MCF 10A (cell line): ENCODE measurements at regions of chr7 and their contacts with region 1.

Region 1: GRCh38 chr7:17680943-17681351 is 259.3 kb downstream of the SNX13 start:
- DNase-seq: peak; percentile 41
- H3K4me3 Mint-ChIP-seq: peak overlapping the region; percentile 37
- H3K27ac Mint-ChIP-seq: peak overlapping the region; percentile 95
- H3K4me1 Mint-ChIP-seq: peaks cover 69% of the 10 kb centered on the region
- H3K27me3 Mint-ChIP-seq: no peaks in the 10 kb centered on the region
- CTCF ChIP-seq: peak; percentile 35

Region 2: GRCh38 chr7:17275749-17276671 is 404.9 kb before region 1 on chr7:
- CTCF ChIA-PET with region 1: no interaction called
- POLR2A ChIA-PET with region 1: no interaction called
- intact Hi-C with region 1: no loop called
- DNase-seq: peak; percentile 63
- H3K4me3 Mint-ChIP-seq: no peak overlapping the region
- H3K27ac Mint-ChIP-seq: peak overlapping the region; percentile 85
- H3K4me1 Mint-ChIP-seq: peaks cover 19% of the 10 kb centered on the region
- H3K27me3 Mint-ChIP-seq: no peaks in the 10 kb centered on the region
- CTCF ChIP-seq: no peak

Region 3: GRCh38 chr7:17333212-17333611 is 347.7 kb before region 1 on chr7:
- CTCF ChIA-PET with region 1: no interaction called
- POLR2A ChIA-PET with region 1: no interaction called
- intact Hi-C with region 1: no loop called
- DNase-seq: no peak
- H3K4me3 Mint-ChIP-seq: no peak overlapping the region
- H3K27ac Mint-ChIP-seq: no peak overlapping the region
- H3K4me1 Mint-ChIP-seq: peaks cover 6% of the 10 kb centered on the region
- H3K27me3 Mint-ChIP-seq: no peaks in the 10 kb centered on the region
- CTCF ChIP-seq: no peak

Region 4: GRCh38 chr7:17696443-17696842 is 15.5 kb after region 1 on chr7:
- CTCF ChIA-PET with region 1: interaction called, 16 read pairs
- POLR2A ChIA-PET with region 1: interaction called, 70 read pairs
- intact Hi-C with region 1: no loop called
- DNase-seq: peak; percentile 99
- H3K4me3 Mint-ChIP-seq: no peak overlapping the region
- H3K27ac Mint-ChIP-seq: peak overlapping the region; percentile 89
- H3K4me1 Mint-ChIP-seq: peaks cover 20% of the 10 kb centered on the region
- H3K27me3 Mint-ChIP-seq: no peaks in the 10 kb centered on the region
- CTCF ChIP-seq: no peak